ENCODE measurements at regions of chr12 and their contacts with region 1.

Region 1: DNA sequence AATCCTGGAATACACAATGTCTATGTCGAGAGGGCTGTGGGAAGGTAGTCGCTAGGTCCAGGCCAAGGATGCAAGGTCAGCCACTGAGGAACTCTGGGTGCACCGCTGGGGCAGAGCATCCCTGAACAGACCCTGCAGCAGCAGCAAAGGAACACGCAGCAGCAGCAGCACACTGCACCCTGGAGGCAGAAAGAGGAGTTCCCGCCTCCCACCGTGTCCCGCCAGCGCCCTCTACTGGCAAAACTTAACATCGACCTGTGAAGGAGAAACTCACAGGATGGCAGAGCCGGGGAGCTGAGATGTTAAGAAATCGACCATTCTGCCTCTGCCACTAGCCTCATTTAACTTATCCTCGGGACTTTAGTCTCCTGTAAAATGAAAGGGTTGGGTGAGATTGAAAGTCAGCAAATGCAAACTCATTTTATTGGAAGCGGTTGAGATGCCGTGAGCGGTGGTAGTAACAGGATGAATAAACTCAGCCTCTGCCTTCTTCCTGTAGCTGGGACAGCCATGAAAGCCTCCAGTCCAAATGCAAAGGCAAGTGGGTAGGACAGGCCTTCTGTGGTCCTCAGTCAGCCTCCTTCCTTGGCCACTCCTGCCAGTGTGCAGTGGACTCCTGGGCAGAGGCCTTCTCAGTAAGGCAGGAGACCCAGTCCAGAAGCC is 45.6 kb downstream of the STAB2 start:
- DNase-seq: peak; percentile 70 to 80
- H3K4me3 ChIP-seq: no peak overlapping the region
- H3K4me3 Mint-ChIP-seq: no peak overlapping the region
- H3K27ac Mint-ChIP-seq: no peak overlapping the region
- H3K4me1 ChIP-seq: no peaks in the 10 kb centered on the region
- H3K4me1 Mint-ChIP-seq: no peaks in the 10 kb centered on the region
- H3K27me3 ChIP-seq: no peaks in the 10 kb centered on the region; the same call in 1 of the 2 replicates
- H3K27me3 Mint-ChIP-seq: peaks cover 4% of the 10 kb centered on the region
- CTCF ChIP-seq: peak; percentile 92 to 94

Region 2: DNA sequence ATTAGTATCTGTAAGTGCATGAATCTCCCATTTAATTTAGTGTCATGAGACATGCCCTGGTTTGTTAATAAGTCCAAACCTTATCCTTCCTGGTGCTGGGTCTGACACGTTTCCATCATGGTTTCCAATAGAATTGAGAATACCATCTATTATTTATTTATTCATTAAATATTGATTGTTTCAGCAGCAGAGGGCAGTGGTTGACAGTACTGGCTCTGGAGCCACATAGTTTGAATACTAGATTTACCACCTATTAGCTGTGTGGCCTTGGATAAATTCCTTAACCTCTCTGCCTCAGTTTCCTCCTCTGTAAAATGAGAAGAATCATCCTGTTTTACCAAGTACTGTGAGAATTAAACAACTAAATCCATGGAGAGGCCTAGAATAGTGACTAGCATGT is 46.6 kb before region 1 on chr12:
- CTCF ChIA-PET with region 1: interaction called, 4 read pairs
- POLR2A ChIA-PET with region 1: no interaction called
- intact Hi-C with region 1: loop called (anchors 1 kb)
- DNase-seq: no peak
- H3K4me3 ChIP-seq: no peak overlapping the region
- H3K4me3 Mint-ChIP-seq: no peak overlapping the region
- H3K27ac Mint-ChIP-seq: no peak overlapping the region
- H3K4me1 ChIP-seq: peaks cover 7% of the 10 kb centered on the region; the same call in 1 of the 2 replicates
- H3K4me1 Mint-ChIP-seq: no peaks in the 10 kb centered on the region
- H3K27me3 ChIP-seq: no peaks in the 10 kb centered on the region
- H3K27me3 Mint-ChIP-seq: peaks cover 15% of the 10 kb centered on the region
- CTCF ChIP-seq: no peak

Region 3: GRCh38 chr12:103680591-103681141 is 48.0 kb after region 1 on chr12:
- CTCF ChIA-PET with region 1: no interaction called
- POLR2A ChIA-PET with region 1: no interaction called
- intact Hi-C with region 1: no loop called
- DNase-seq: no peak
- H3K4me3 ChIP-seq: no peak overlapping the region
- H3K4me3 Mint-ChIP-seq: no peak overlapping the region
- H3K27ac Mint-ChIP-seq: no peak overlapping the region
- H3K4me1 ChIP-seq: no peaks in the 10 kb centered on the region
- H3K4me1 Mint-ChIP-seq: no peaks in the 10 kb centered on the region
- H3K27me3 ChIP-seq: no peaks in the 10 kb centered on the region
- H3K27me3 Mint-ChIP-seq: peaks cover 2% of the 10 kb centered on the region
- CTCF ChIP-seq: no peak

Measured in Caco-2 (cell line).